ENCODE measurements at regions of chr19 and their contacts with region 1.

Region 1: DNA sequence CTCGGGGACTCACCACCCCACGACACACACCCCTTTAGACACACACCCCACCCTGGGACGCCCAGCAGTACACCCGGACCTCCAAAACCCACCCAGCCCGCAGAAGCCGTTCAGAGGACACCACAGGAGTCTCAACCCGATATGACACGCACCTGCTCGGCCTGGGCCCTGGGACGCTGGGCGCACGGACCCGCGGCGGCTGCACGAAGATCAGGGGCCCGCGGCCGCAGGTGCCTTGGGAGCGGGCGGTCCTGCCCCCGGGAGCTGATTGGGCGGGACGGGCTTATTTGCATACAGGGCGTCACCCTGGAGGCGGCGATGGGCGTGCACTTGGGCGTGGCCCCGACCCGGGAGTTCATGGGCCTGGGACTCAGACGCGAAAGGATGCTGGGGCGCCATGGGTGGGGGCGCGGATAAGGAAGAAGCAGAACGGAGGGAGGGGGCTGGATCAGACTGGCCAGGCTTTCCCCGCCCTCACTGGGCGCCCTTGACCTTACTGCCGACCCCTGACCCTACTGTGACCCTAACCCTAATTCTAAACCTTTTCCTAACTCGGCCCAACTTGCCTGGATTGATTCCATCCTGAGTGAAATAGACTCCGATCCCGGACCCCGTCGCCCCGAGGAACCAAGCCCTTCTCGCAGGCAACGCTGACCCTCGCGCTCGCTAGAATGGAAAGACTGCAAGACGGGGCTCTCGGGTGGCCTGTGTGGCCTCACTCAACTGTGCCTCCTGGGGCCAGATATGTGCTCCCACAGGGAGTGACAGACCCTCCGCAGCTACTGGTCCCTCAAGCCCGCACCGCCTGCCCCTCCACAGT is at the start of gene MEF2B:
- DNase-seq: peak; percentile 89
- ATAC-seq: peak; percentile 95
- H3K4me3 Mint-ChIP-seq: peak within 1 kb of the TSS; percentile 83
- H3K27ac Mint-ChIP-seq: peak within 1 kb of the TSS; percentile 63
- H3K4me1 Mint-ChIP-seq: peaks cover 33% of the 10 kb centered on the region
- H3K27me3 Mint-ChIP-seq: no peaks in the 10 kb centered on the region
- CTCF ChIP-seq: no peak
- total RNA-seq, gene MEF2B: 11.7 and 15.5 TPM in 2 replicates

Region 2: GRCh38 chr19:19053508-19054314 is 116.6 kb before region 1 on chr19:
- CTCF ChIA-PET with region 1: interaction called, 7 read pairs
- POLR2A ChIA-PET with region 1: no interaction called
- intact Hi-C with region 1: loop called (anchors 1 kb)
- DNase-seq: peak; percentile 48
- ATAC-seq: peak; percentile 69
- H3K4me3 Mint-ChIP-seq: no peak overlapping the region
- H3K27ac Mint-ChIP-seq: no peak overlapping the region
- H3K4me1 Mint-ChIP-seq: no peaks in the 10 kb centered on the region
- H3K27me3 Mint-ChIP-seq: no peaks in the 10 kb centered on the region
- CTCF ChIP-seq: no peak

Region 3: GRCh38 chr19:19138169-19138981 is 31.9 kb before region 1 on chr19 and contains the start of gene TMEM161A:
- CTCF ChIA-PET with region 1: interaction called, 43 read pairs
- POLR2A ChIA-PET with region 1: interaction called, 9 read pairs
- intact Hi-C with region 1: no loop called
- DNase-seq: peak; percentile 90
- ATAC-seq: peak; percentile 99
- H3K4me3 Mint-ChIP-seq: peak within 1 kb of the TSS; percentile 98
- H3K27ac Mint-ChIP-seq: peak within 1 kb of the TSS; percentile 90
- H3K4me1 Mint-ChIP-seq: peaks cover 30% of the 10 kb centered on the region
- H3K27me3 Mint-ChIP-seq: no peaks in the 10 kb centered on the region
- CTCF ChIP-seq: no peak
- total RNA-seq, gene TMEM161A: 20.8 and 22.6 TPM in 2 replicates

Region 4: GRCh38 chr19:19145684-19146608 is 24.3 kb before region 1 on chr19:
- CTCF ChIA-PET with region 1: interaction called, 104 read pairs
- POLR2A ChIA-PET with region 1: interaction called, 15 read pairs
- intact Hi-C with region 1: loop called (anchors 1 kb)
- DNase-seq: peak; percentile 92
- ATAC-seq: peak; percentile 93
- H3K4me3 Mint-ChIP-seq: no peak overlapping the region
- H3K27ac Mint-ChIP-seq: no peak overlapping the region
- H3K4me1 Mint-ChIP-seq: peaks cover 5% of the 10 kb centered on the region
- H3K27me3 Mint-ChIP-seq: no peaks in the 10 kb centered on the region
- CTCF ChIP-seq: no peak

Region 5: GRCh38 chr19:19155495-19156219 is 14.6 kb before region 1 on chr19:
- CTCF ChIA-PET with region 1: interaction called, 53 read pairs
- POLR2A ChIA-PET with region 1: interaction called, 48 read pairs
- intact Hi-C with region 1: loop called (anchors 1 kb)
- DNase-seq: no peak
- ATAC-seq: peak; percentile 56
- H3K4me3 Mint-ChIP-seq: peak overlapping the region; percentile 57
- H3K27ac Mint-ChIP-seq: peak overlapping the region; percentile 74
- H3K4me1 Mint-ChIP-seq: peaks cover 62% of the 10 kb centered on the region
- H3K27me3 Mint-ChIP-seq: no peaks in the 10 kb centered on the region
- CTCF ChIP-seq: no peak

Region 6: DNA sequence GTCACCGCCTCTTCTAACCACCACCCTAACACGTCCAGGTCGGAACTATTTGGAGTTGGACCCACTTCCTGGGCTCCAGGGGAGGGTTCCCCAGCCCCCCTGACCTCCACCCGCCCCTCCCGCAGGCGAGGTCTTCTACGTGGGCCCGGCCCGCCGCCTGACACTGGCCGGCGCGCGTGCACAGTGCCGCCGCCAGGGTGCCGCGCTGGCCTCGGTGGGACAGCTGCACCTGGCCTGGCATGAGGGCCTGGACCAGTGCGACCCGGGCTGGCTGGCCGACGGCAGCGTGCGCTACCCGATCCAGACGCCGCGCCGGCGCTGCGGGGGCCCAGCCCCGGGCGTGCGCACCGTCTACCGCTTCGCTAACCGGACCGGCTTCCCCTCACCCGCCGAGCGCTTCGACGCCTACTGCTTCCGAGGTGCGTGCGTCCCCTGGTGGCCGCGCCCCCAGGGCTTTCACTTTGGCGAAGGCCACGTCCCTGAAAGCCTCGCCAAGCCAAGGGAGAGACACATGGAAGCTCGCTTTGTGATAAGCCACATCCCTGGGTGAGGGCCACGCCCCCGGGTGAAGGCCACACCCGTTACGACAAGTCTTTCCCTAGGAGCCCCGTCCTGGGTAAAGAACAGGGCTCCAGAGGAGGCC is 54.7 kb after region 1 on chr19:
- CTCF ChIA-PET with region 1: interaction called, 3 read pairs
- POLR2A ChIA-PET with region 1: no interaction called
- intact Hi-C with region 1: loop called (anchors 1 kb)
- DNase-seq: peak; percentile 71
- ATAC-seq: peak; percentile 96
- H3K4me3 Mint-ChIP-seq: peak overlapping the region; percentile 75
- H3K27ac Mint-ChIP-seq: no peak overlapping the region
- H3K4me1 Mint-ChIP-seq: peaks cover 4% of the 10 kb centered on the region
- H3K27me3 Mint-ChIP-seq: peaks cover 19% of the 10 kb centered on the region
- CTCF ChIP-seq: peak; percentile 20

Region 7: DNA sequence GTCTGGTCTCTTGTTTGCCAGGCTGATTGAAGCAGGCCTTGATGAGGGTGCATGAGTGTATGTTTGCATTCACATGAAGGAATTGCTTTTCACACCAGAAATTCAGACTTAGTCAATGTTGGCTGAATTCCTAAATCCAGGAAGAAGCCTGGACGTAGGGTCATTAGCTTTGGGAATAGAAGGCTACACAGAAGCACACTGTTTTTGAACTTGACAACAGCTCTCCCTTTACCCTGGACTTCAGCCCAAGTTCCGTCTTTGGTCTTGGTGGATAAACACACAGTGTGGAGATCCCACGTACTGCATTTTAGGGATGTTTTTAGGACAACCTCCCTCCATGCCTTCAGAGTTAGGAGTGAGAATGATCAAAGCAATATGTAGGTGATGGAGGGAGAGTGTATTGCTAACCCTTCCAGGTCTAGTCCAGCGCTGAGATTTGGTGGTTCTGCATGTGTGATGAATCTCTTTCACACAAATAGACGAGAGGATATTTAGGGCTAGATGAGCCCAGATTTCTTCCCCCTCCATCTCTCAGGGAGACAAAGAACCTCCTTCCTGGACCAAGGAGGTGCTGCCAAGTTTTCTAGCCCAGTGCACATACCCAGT is 80.0 kb after region 1 on chr19:
- CTCF ChIA-PET with region 1: no interaction called
- POLR2A ChIA-PET with region 1: no interaction called
- intact Hi-C with region 1: no loop called
- DNase-seq: no peak
- ATAC-seq: no peak
- H3K4me3 Mint-ChIP-seq: no peak overlapping the region
- H3K27ac Mint-ChIP-seq: no peak overlapping the region
- H3K4me1 Mint-ChIP-seq: no peaks in the 10 kb centered on the region
- H3K27me3 Mint-ChIP-seq: peaks cover 38% of the 10 kb centered on the region
- CTCF ChIP-seq: no peak

Region 8: DNA sequence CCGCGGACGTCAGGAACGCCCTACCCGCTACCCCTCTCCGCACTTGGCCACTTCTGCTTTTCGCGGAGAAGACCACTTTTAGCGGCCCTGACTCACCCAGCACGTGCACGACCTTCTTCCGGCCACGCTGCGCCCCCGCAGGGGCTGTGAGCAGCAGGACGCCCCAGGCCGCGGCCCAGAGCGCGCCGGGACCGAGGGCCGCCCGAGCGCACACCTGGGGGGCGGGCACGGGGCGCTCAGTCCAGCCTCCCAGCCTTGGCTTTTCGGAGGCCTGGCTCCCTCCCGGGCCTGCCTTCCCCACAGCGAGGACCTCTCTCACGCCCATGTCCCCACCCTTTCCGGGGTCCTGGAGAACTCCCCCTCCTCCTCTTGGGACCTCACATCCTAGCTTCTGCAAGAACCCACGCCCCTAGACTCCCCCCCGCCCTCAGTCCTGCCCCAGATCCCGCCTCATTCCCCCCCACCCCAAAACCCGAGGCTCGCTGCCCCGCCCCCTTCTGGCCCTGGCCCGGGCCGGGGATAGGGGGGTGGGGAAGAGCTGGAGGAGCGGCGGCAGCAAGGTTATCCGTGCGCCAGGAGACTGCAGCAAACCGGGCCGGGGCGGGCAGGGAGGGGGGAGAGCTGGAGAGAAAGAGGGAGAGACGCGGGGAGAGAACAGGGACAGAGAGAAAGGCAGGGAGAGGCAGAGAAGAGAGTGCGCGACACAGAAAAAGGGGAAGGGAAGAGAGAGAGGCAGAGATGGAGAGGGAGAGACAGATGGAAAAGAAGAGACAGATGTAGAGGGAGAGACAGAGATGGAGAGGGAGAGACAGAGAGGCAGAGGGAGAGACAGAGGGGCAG is 91.3 kb after region 1 on chr19:
- CTCF ChIA-PET with region 1: no interaction called
- POLR2A ChIA-PET with region 1: interaction called, 12 read pairs
- intact Hi-C with region 1: no loop called
- DNase-seq: peak; percentile 23
- ATAC-seq: peak; percentile 80
- H3K4me3 Mint-ChIP-seq: peak overlapping the region; percentile 56
- H3K27ac Mint-ChIP-seq: peak overlapping the region; percentile 47
- H3K4me1 Mint-ChIP-seq: peaks cover 13% of the 10 kb centered on the region
- H3K27me3 Mint-ChIP-seq: peaks cover 35% of the 10 kb centered on the region
- CTCF ChIP-seq: no peak

Measured in activated B cell treated with CpG ODN at 0.5 μM for 24 hours (primary cell).